Colonic mucosa (tissue), 4 donors: ENCODE measurements at regions of chr3 and their contacts with region 1.

Region 1: GRCh38 chr3:158918008-158918407 is 116.2 kb downstream of the MFSD1 start:
- DNase-seq: peak; percentile 48
- H3K4me3 ChIP-seq: no peak overlapping the region
- H3K27ac ChIP-seq: no peak overlapping the region
- H3K4me1 ChIP-seq: no peaks in the 10 kb centered on the region
- H3K27me3 ChIP-seq: no peaks in the 10 kb centered on the region
- CTCF ChIP-seq: peak; percentile 47

Region 2: GRCh38 chr3:158845765-158846350 is 72.2 kb before region 1 on chr3:
- intact Hi-C with region 1: loop called (anchors 5 kb)
- DNase-seq: peak; percentile 27
- H3K4me3 ChIP-seq: no peak overlapping the region
- H3K27ac ChIP-seq: no peak overlapping the region
- H3K4me1 ChIP-seq: no peaks in the 10 kb centered on the region
- H3K27me3 ChIP-seq: no peaks in the 10 kb centered on the region
- CTCF ChIP-seq: peak; percentile 56

Region 3: GRCh38 chr3:159130108-159130507 is 212.1 kb after region 1 on chr3:
- intact Hi-C with region 1: loop called (anchors 5 kb)
- DNase-seq: peak; percentile 60
- H3K4me3 ChIP-seq: no peak overlapping the region
- H3K27ac ChIP-seq: no peak overlapping the region
- H3K4me1 ChIP-seq: no peaks in the 10 kb centered on the region
- H3K27me3 ChIP-seq: no peaks in the 10 kb centered on the region
- CTCF ChIP-seq: peak; percentile 33

Region 4: GRCh38 chr3:159252772-159253384 is 334.9 kb after region 1 on chr3:
- intact Hi-C with region 1: loop called (anchors 5 kb)
- DNase-seq: no peak
- H3K4me3 ChIP-seq: no peak overlapping the region
- H3K27ac ChIP-seq: no peak overlapping the region
- H3K4me1 ChIP-seq: no peaks in the 10 kb centered on the region
- H3K27me3 ChIP-seq: no peaks in the 10 kb centered on the region
- CTCF ChIP-seq: peak; percentile 71